Activated CD8-positive, alpha-beta T cell treated with anti-CD3 and anti-CD28 coated beads, Interleukin-2, amount 10 ng/mL, durations not matched to agents 7 days and 5 days (primary cell): ENCODE measurements at regions of chr1 and their contacts with region 1.

Region 1: GRCh38 chr1:173476664-173477285 is 360 bp upstream of the PRDX6 start:
- DNase-seq: peak; percentile 83
- ATAC-seq: peak; percentile 89
- H3K4me3 Mint-ChIP-seq: peak overlapping the region; percentile 93
- H3K27ac Mint-ChIP-seq: peak overlapping the region; percentile 98
- H3K4me1 Mint-ChIP-seq: peaks cover 56% of the 10 kb centered on the region
- H3K27me3 Mint-ChIP-seq: no peaks in the 10 kb centered on the region

Region 2: DNA sequence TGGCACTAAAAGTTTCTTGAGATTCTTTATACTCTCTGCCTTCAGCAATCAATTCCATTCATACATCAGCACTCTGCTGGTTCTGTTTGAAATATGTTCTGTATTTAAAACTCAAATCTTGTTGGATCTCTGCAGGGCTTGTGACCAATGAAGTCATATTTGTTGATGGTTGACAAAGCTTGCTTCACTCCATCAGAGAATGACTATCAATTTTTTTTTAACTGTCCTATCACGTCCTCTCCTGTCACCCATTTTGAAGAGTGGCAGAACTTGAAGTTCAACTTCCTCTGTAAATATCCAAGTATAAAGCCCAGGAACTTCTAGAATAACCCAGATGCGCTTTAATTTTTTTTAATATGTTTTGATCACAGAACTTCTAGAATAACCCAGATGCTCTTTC is 11.2 kb after region 1 on chr1:
- CTCF ChIA-PET with region 1: no interaction called
- POLR2A ChIA-PET with region 1: interaction called, 18 read pairs
- DNase-seq: no peak
- ATAC-seq: no peak
- H3K4me3 Mint-ChIP-seq: no peak overlapping the region
- H3K27ac Mint-ChIP-seq: no peak overlapping the region
- H3K4me1 Mint-ChIP-seq: peaks cover 12% of the 10 kb centered on the region
- H3K27me3 Mint-ChIP-seq: no peaks in the 10 kb centered on the region

Region 3: GRCh38 chr1:173714759-173715537 is 238.2 kb after region 1 on chr1 and contains the start of gene KLHL20:
- CTCF ChIA-PET with region 1: interaction called, 7 read pairs
- POLR2A ChIA-PET with region 1: interaction called, 28 read pairs
- DNase-seq: peak; percentile 92
- ATAC-seq: peak; percentile 99
- H3K4me3 Mint-ChIP-seq: peak within 1 kb of the TSS; percentile 90
- H3K27ac Mint-ChIP-seq: peak within 1 kb of the TSS; percentile 96
- H3K4me1 Mint-ChIP-seq: peaks cover 24% of the 10 kb centered on the region
- H3K27me3 Mint-ChIP-seq: peaks cover 15% of the 10 kb centered on the region
- total RNA-seq, gene KLHL20: 18.3 to 22.3 TPM

Region 4: GRCh38 chr1:173824331-173825081 is 347.7 kb after region 1 on chr1 and contains the starts of genes CENPL and DARS2:
- CTCF ChIA-PET with region 1: interaction called, 8 read pairs
- POLR2A ChIA-PET with region 1: interaction called, 14 read pairs
- DNase-seq: peak; percentile 95
- ATAC-seq: peak; percentile 89
- H3K4me3 Mint-ChIP-seq: peak within 1 kb of the TSS; percentile 86
- H3K27ac Mint-ChIP-seq: peak within 1 kb of the TSS; percentile 98
- H3K4me1 Mint-ChIP-seq: peaks cover 56% of the 10 kb centered on the region
- H3K27me3 Mint-ChIP-seq: no peaks in the 10 kb centered on the region
- total RNA-seq, gene CENPL: 35.5 to 39.2 TPM
- total RNA-seq, gene DARS2: 32.7 to 35.7 TPM